Left lung (tissue), 14 donors: ENCODE measurements at regions of chr6 and their contacts with region 1.

Region 1: DNA sequence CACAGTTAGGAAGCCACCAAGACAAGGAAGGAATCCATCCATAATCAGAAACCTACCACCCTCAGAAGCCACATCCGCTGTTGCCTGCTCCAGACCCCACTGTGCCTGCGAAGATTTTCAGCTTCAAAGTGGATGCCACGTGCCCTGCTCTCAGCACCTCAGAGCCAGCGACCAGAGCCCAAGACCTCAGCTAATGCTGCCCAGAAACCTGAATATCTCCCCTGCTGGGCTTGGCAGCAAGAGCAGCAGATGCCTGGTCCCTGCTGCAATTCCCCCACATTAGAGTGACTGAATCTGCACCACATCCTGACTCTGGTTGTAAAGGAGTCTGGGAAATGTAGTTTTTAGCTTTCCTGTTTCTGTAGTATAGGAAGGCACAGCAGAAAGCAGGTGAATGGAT is 10.7 kb upstream of the ULBP3 start:
- DNase-seq: no peak
- ATAC-seq: no peak
- H3K4me3 ChIP-seq: no peak overlapping the region
- H3K27ac ChIP-seq: no peak overlapping the region
- H3K4me1 ChIP-seq: no peaks in the 10 kb centered on the region
- H3K27me3 ChIP-seq: peaks cover 0 to 7% of the 10 kb centered on the region in 2 donors
- CTCF ChIP-seq: no peak

Region 2: GRCh38 chr6:149840345-149841075 is 239.1 kb before region 1 on chr6:
- intact Hi-C with region 1: no loop called
- DNase-seq: peak in 3 of 4 donors; percentile 42 to 69 (median 63)
- ATAC-seq: peak; percentile 96
- H3K4me3 ChIP-seq: no peak overlapping the region
- H3K27ac ChIP-seq: no peak overlapping the region
- H3K4me1 ChIP-seq: peaks cover 0 to 4% of the 10 kb centered on the region in 2 donors
- H3K27me3 ChIP-seq: no peaks in the 10 kb centered on the region
- CTCF ChIP-seq: peak; percentile 44 to 47

Region 3: DNA sequence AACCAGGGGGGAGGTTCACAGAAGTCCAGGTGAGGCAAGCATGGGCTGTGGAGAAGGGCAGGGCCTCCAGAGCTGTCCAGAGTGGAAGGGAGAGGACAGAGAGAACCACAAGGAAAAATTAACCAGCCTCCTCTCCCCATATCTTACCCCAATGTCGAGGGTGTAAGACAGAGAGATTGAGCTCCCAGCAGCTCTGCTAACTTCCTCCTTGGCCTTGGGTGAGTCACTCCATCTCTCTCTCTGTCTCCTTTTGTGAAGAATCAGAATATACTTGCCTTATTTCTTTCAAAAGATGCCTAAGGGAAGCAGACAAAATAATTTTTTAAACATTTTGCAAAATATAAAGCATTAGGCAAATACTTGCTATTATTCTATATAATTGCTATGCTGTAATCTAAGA is 230.9 kb after region 1 on chr6:
- intact Hi-C with region 1: no loop called
- DNase-seq: no peak
- ATAC-seq: no peak
- H3K4me3 ChIP-seq: no peak overlapping the region
- H3K27ac ChIP-seq: no peak overlapping the region
- H3K4me1 ChIP-seq: no peaks in the 10 kb centered on the region
- H3K27me3 ChIP-seq: no peaks in the 10 kb centered on the region
- CTCF ChIP-seq: no peak

Region 4: DNA sequence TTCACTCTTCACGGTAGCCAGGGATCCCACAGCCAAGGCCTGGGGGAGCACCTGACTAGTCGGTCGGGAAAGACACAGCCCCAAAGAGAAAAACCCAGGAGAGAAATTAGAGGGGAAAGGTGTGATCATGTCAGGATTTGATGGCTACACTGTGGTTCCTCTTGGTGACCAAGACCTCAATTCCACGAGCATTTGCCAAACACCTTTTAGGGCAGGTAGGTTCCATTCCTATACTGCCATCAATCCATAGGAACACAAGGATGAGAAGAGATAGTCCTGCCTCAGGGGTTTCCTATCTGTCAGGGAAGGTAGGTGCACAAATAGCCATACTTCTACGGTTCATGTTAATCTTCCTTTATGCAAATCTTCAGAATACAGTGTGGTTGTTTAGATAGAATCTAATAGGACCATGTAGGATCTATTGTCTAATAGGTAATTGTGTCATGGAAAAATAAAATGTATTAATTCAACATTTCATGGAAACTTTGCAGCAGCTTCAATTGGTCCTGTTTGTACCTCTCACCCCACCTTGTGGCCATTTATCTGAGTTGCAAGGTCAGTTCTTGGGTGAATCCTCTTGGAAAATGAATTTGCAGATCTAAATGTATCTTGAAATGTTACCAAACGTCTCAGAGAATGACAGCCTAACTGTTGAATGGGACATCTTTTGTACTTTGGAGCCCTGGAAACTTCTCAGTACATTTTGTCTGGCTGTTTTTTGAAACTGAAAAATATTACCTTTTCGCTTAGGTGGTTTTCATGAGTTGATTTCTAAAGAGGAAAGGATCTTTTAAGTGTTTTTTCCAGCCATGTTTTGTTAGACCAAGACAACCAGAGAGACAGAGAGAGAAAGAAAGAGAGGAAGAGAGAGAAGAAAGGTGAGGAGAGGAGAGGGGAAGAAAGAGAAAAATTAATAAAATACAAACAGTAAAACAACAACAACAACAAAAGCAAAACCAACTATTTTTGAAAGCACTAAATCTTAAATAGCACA is 255.5 kb after region 1 on chr6:
- intact Hi-C with region 1: loop called in 1 of 2 experiments (anchors 5 kb)
- DNase-seq: peak in 2 of 4 donors; percentile 42 to 76
- ATAC-seq: peak; percentile 85
- H3K4me3 ChIP-seq: no peak overlapping the region
- H3K27ac ChIP-seq: no peak overlapping the region
- H3K4me1 ChIP-seq: no peaks in the 10 kb centered on the region
- H3K27me3 ChIP-seq: no peaks in the 10 kb centered on the region
- CTCF ChIP-seq: peak; percentile 71 to 79

Region 5: DNA sequence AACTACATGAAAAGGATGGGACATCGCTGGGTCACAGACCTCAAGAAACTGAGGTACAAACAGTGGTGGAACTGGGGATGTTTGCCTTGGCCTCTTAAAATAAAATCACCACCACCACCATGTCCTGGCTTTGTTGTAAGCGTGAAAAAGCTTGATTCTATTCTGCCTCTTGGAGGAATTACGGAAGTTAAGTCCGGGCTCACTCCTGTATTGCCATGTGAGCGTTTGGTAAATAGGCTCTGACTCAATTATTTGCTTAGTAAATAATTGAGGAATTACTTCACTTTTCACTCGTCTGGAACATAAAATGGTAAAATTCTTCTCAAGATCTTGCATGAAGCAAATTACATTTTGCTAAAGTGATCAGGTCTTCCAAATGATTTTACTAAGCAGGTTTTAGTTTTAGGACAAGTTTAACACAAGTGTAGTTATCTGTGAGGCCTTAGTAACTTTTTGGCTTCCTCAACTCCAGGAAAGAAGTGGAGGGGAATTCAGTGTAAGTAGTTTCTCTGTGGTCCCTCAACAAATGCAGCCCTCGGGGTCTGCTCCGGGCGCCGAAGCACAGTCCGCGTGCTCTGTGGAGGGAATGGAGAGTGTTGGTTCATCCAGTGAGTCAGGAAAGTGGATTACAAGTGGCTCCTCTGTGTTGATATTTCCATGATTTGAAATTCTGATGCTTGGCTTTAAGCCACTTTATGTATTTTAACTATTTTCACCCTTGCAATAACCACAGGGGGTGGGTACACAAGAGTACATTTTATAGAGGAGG is 313.0 kb after region 1 on chr6:
- intact Hi-C with region 1: loop called in 1 of 2 experiments (anchors 5 kb)
- DNase-seq: no peak
- ATAC-seq: peak; percentile 64
- H3K4me3 ChIP-seq: no peak overlapping the region
- H3K27ac ChIP-seq: peak overlapping the region; percentile 39 to 82
- H3K4me1 ChIP-seq: no peaks in the 10 kb centered on the region
- H3K27me3 ChIP-seq: no peaks in the 10 kb centered on the region
- CTCF ChIP-seq: no peak

Region 6: DNA sequence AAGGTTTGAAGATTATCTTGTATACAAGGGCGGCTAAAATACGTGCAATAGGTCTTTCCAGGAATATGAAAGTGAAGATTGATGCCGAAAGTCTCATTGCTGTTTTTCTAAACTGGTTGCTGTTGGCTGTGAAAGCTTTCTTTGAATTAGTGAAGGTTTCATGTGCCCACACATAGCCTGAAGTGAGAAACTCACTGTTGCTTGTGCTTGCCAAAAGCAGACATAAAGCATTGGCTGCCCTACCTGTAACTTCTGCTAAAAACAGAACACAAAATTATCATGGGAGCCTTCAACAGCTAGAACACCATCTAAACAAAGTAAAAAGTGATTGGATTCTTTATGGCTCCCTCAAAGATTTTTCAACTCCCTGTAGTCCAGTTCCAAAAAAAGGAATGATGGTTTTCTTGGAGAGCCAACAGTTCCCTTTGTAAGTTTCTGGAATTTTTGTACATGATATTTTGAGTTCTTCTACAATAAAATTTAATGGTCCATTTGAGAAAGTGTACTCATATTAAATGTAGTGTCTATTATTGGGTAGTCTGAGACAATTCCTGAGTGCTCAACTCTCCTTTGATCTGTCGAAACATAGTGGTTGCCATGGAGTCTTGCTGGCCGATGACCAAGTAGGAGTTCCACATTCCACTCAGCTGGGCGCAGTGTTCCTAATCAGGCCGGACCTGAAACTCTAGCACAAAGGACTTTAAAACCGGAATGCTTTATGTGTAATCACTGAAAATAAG is 588.5 kb after region 1 on chr6:
- intact Hi-C with region 1: no loop called
- DNase-seq: peak in 3 of 4 donors; percentile 86 to 93 (median 89)
- ATAC-seq: peak; percentile 89
- H3K4me3 ChIP-seq: no peak overlapping the region
- H3K27ac ChIP-seq: peak overlapping the region; percentile 73 to 78
- H3K4me1 ChIP-seq: peaks cover 11 to 14% of the 10 kb centered on the region in 2 donors
- H3K27me3 ChIP-seq: no peaks in the 10 kb centered on the region
- CTCF ChIP-seq: no peak